ENCODE measurements at regions of chr10 and their contacts with region 1.

Region 1: GRCh38 chr10:81108516-81109199 is 571.0 kb downstream of the SH2D4B start:
- DNase-seq: peak; percentile 46
- ATAC-seq: peak; percentile 90
- H3K4me3 ChIP-seq: no peak overlapping the region
- H3K27ac ChIP-seq: peak overlapping the region; percentile 1; the same call in 1 of the 2 replicates
- H3K4me1 ChIP-seq: no peaks in the 10 kb centered on the region
- H3K27me3 ChIP-seq: no peaks in the 10 kb centered on the region
- CTCF ChIP-seq: no peak
- EP300 ChIP-seq: peak; percentile 66 to 83; a peak in 3 of 4 replicates
- POLR2A ChIP-seq: no peak
- RAD21 ChIP-seq: no peak

Region 2: DNA sequence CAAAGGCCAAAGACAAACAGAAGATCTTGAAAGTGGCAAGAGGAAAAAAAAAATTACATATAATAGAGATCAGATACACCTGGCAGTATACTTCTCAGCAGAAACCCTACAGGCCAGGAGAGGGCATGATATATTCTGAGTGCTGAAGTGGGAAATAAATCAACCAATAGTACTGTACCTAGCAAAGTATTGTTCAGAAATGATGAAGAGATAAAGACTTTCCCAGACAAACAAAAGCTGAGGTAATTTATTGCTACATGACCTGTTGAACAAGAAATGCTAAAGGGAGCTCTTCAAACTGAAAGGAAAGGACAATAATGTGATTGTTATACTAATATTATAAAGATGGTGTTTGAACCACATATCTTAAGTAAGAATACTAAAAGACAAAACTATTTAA is 279.0 kb before region 1 on chr10:
- CTCF ChIA-PET with region 1: no interaction called
- POLR2A ChIA-PET with region 1: no interaction called
- RAD21 ChIA-PET with region 1: no interaction called
- SMC1A ChIA-PET with region 1: no interaction called
- in situ Hi-C with region 1: no loop called
- intact Hi-C with region 1: no loop called
- DNase-seq: no peak
- ATAC-seq: no peak
- H3K4me3 ChIP-seq: no peak overlapping the region
- H3K27ac ChIP-seq: no peak overlapping the region
- H3K4me1 ChIP-seq: no peaks in the 10 kb centered on the region
- H3K27me3 ChIP-seq: no peaks in the 10 kb centered on the region
- CTCF ChIP-seq: no peak
- EP300 ChIP-seq: no peak
- POLR2A ChIP-seq: no peak
- RAD21 ChIP-seq: no peak

Region 3: DNA sequence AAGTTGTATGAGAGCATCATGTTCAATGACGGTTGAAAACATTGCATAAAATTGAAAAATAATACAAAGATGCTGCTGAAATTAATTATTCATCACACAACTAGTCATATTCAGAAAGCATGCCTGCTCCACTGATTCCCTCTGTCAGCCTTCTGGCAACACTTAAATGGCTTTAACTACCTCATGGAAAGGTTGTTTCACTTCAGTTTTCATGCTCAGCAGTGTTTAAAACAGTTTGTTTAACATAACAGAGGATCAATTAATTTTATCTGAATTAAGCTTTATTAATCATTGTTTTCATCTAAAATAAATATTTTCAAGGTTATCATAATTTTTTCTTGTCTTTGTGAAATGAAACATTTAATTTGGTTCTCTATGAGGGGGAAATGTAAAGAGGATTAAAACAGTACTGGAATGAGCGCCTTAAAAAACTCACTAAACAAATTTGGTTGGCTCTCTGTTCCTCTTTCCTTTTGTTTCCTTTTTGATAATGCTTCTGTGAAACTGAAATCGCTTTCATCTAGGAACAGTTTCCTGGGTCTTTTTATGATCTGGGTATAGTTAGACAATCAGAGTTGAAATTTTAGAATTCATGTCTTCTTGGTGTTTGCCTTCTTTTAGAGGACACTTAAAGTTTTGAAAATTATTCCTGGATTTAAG is 143.6 kb before region 1 on chr10:
- CTCF ChIA-PET with region 1: no interaction called
- POLR2A ChIA-PET with region 1: no interaction called
- RAD21 ChIA-PET with region 1: no interaction called
- SMC1A ChIA-PET with region 1: no interaction called
- in situ Hi-C with region 1: no loop called
- intact Hi-C with region 1: loop called (anchors 10 kb)
- DNase-seq: peak; percentile 25
- ATAC-seq: peak; percentile 86
- H3K4me3 ChIP-seq: no peak overlapping the region
- H3K27ac ChIP-seq: peak overlapping the region; percentile 3; the same call in 1 of the 2 replicates
- H3K4me1 ChIP-seq: peaks cover 7% of the 10 kb centered on the region; the same call in 1 of the 2 replicates
- H3K27me3 ChIP-seq: no peaks in the 10 kb centered on the region
- CTCF ChIP-seq: no peak
- EP300 ChIP-seq: peak in 1 of 2 experiments; percentile 61; a peak in 1 of 4 replicates
- POLR2A ChIP-seq: no peak
- RAD21 ChIP-seq: no peak

Region 4: GRCh38 chr10:81036257-81036656 is 72.4 kb before region 1 on chr10:
- CTCF ChIA-PET with region 1: interaction called, 3 read pairs
- POLR2A ChIA-PET with region 1: no interaction called
- RAD21 ChIA-PET with region 1: interaction called, 7 read pairs
- SMC1A ChIA-PET with region 1: interaction called, 7 read pairs
- in situ Hi-C with region 1: no loop called
- intact Hi-C with region 1: loop called (anchors 2 kb)
- DNase-seq: peak; percentile 81
- ATAC-seq: peak; percentile 90
- H3K4me3 ChIP-seq: no peak overlapping the region
- H3K27ac ChIP-seq: peak overlapping the region; percentile 65
- H3K4me1 ChIP-seq: peaks cover 26% of the 10 kb centered on the region
- H3K27me3 ChIP-seq: no peaks in the 10 kb centered on the region
- CTCF ChIP-seq: no peak
- EP300 ChIP-seq: peak; percentile 86 to 97; a peak in 3 of 4 replicates
- POLR2A ChIP-seq: no peak
- RAD21 ChIP-seq: no peak

Region 5: DNA sequence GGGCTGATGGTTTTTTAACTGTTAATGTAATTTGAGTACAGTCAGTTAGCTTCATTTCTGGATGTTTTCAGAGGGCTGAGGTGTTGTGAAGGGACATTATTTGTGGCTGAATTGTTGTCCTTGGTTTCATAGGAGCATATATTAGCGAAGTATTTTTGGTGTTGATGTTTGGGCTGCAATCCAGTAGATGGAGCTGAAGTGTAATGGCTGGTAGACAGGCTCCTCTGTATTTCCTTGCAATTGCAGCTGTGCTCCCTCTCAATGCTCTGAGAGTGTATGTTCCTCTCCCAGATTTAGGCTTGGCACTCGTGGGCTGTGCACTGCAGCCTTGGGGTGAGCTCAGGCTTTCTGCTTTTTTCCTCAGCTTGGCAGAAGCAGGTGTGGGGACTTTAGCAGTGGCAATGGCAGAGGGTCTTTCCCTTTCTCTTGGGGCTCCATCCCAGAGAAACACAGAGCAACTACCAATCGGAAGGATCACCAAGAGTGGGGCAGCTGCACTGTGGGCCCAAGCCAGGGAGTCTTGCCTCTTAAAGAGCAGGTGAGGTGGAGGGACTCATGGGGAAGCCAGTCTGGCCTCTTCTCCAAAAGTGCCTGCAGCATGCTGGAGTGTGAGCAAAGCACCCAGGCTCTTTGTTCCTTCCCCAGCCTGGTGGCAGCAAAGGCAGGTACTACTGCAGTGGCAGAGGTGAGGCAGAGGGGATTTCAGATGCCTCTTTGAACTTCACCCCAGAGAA is 26.6 kb before region 1 on chr10:
- CTCF ChIA-PET with region 1: interaction called, 5 read pairs
- POLR2A ChIA-PET with region 1: interaction called, 3 read pairs
- RAD21 ChIA-PET with region 1: interaction called, 19 read pairs
- SMC1A ChIA-PET with region 1: interaction called, 3 read pairs
- in situ Hi-C with region 1: no loop called
- intact Hi-C with region 1: no loop called
- DNase-seq: no peak
- ATAC-seq: peak; percentile 74
- H3K4me3 ChIP-seq: no peak overlapping the region
- H3K27ac ChIP-seq: no peak overlapping the region
- H3K4me1 ChIP-seq: no peaks in the 10 kb centered on the region
- H3K27me3 ChIP-seq: no peaks in the 10 kb centered on the region
- CTCF ChIP-seq: peak; percentile 47 to 50 (median 49); a peak in 5 of 6 replicates
- EP300 ChIP-seq: no peak
- POLR2A ChIP-seq: no peak
- RAD21 ChIP-seq: peak; percentile 90

Region 6: DNA sequence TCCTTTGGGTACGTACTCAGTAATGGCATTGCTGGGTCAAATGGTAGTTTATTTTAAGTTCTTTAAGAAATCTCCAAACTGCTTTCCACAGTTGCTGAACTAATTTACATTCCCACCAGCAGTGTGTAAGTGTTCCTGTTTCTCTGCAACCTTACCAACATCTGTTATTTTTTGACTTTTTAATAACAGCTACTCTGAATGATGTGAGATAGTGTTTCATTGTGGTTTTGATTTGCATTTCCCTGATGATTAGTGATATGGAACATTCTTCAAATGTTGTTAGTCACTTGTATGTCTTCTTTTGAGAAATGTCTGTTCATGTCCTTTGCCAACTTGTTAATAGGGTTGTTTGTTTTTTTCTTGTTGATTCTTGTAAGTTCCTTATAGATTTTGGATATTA is 12.1 kb before region 1 on chr10:
- CTCF ChIA-PET with region 1: interaction called, 5 read pairs
- POLR2A ChIA-PET with region 1: no interaction called
- RAD21 ChIA-PET with region 1: interaction called, 7 read pairs
- SMC1A ChIA-PET with region 1: interaction called, 18 read pairs
- in situ Hi-C with region 1: no loop called
- intact Hi-C with region 1: no loop called
- DNase-seq: no peak
- ATAC-seq: peak; percentile 83
- H3K4me3 ChIP-seq: 0 out of 2 replicates have a peak overlapping the region, but pooled peaks have one; percentile 2
- H3K27ac ChIP-seq: no peak overlapping the region
- H3K4me1 ChIP-seq: no peaks in the 10 kb centered on the region
- H3K27me3 ChIP-seq: no peaks in the 10 kb centered on the region
- CTCF ChIP-seq: no peak
- EP300 ChIP-seq: 0 out of 4 replicates have a peak, but pooled peaks of 1 of the 2 experiments have one; percentile 18
- POLR2A ChIP-seq: no peak
- RAD21 ChIP-seq: no peak

Region 7: DNA sequence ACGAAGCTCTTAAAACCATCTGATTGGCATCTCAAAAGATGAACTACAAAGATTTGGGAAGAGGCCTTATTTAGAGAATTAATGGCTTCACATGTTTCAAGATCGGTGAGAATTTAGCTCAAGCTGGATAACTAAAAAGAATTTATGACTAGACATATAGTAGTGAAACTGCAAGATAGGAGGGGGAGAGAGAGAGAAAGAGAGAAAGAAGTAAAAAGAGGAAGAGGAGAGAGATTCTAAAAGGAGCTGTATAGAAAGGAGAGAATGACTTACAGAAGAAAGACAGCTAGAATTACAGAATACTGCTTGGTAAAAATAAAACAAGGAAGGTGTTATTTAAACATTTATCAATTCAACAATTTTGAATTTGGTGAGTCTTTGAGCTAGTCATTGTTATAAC is 21.4 kb after region 1 on chr10:
- CTCF ChIA-PET with region 1: interaction called, 4 read pairs
- POLR2A ChIA-PET with region 1: interaction called, 3 read pairs
- RAD21 ChIA-PET with region 1: interaction called, 5 read pairs
- SMC1A ChIA-PET with region 1: interaction called, 21 read pairs
- in situ Hi-C with region 1: no loop called
- intact Hi-C with region 1: no loop called
- DNase-seq: no peak
- ATAC-seq: peak; percentile 46; the same call in 2 of the 3 replicates
- H3K4me3 ChIP-seq: no peak overlapping the region
- H3K27ac ChIP-seq: no peak overlapping the region
- H3K4me1 ChIP-seq: no peaks in the 10 kb centered on the region
- H3K27me3 ChIP-seq: no peaks in the 10 kb centered on the region
- CTCF ChIP-seq: no peak
- EP300 ChIP-seq: no peak
- POLR2A ChIP-seq: no peak
- RAD21 ChIP-seq: no peak

Region 8: DNA sequence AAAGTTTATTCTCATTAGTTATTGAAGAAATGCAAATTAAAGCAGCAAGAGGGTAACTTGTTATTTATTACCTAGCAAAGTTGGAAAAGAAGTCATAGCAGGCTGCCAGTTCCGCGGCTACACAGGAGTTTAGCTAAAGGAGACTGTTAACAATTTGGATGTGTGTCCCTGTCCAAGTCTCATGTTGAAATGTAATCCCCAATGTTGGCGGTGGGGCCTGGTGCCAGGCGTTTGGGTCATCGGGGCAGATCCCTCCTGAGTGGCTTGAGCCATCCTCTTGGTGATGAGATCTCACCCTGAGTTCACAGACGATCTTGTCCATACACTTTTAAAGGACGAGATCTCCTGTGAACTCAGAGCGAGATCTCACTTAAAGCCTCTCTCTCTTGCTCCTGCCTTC is 37.3 kb after region 1 on chr10:
- CTCF ChIA-PET with region 1: no interaction called
- POLR2A ChIA-PET with region 1: no interaction called
- RAD21 ChIA-PET with region 1: no interaction called
- SMC1A ChIA-PET with region 1: no interaction called
- in situ Hi-C with region 1: no loop called
- intact Hi-C with region 1: no loop called
- DNase-seq: no peak
- ATAC-seq: no peak
- H3K4me3 ChIP-seq: no peak overlapping the region
- H3K27ac ChIP-seq: no peak overlapping the region
- H3K4me1 ChIP-seq: no peaks in the 10 kb centered on the region
- H3K27me3 ChIP-seq: no peaks in the 10 kb centered on the region
- CTCF ChIP-seq: no peak
- EP300 ChIP-seq: no peak
- POLR2A ChIP-seq: no peak
- RAD21 ChIP-seq: no peak

Region 9: GRCh38 chr10:81200801-81201200 is 92.1 kb after region 1 on chr10:
- CTCF ChIA-PET with region 1: no interaction called
- POLR2A ChIA-PET with region 1: no interaction called
- RAD21 ChIA-PET with region 1: no interaction called
- SMC1A ChIA-PET with region 1: no interaction called
- in situ Hi-C with region 1: no loop called
- intact Hi-C with region 1: no loop called
- DNase-seq: no peak
- ATAC-seq: no peak
- H3K4me3 ChIP-seq: no peak overlapping the region
- H3K27ac ChIP-seq: no peak overlapping the region
- H3K4me1 ChIP-seq: no peaks in the 10 kb centered on the region
- H3K27me3 ChIP-seq: no peaks in the 10 kb centered on the region
- CTCF ChIP-seq: no peak
- EP300 ChIP-seq: no peak
- POLR2A ChIP-seq: no peak
- RAD21 ChIP-seq: no peak

Measured in GM12878 (cell line).